ENCODE measurements at regions of chr9 and their contacts with region 1.

Region 1: DNA sequence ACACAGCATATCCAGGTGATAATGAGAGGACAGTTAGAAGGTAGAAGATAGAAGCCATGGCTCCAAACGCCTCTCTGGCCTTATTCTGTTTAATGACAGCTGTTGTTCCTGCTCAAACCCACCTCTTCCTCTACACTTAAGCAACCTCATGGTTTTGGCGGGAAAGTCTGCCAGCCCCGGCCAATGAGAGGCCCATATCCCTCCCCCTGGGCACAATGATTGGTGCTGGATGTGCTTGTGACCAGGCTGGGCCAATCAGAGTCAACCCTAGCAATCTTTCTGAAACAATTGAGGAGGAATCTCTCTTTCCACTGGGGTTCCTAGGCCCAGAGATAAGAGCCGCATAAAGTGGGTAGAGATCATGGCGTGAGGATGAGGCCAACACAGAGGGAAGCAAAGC is 4.8 kb upstream of the GFI1B start:
- DNase-seq: peak; percentile 47
- H3K4me3 ChIP-seq: no peak overlapping the region
- H3K27ac ChIP-seq: no peak overlapping the region
- H3K4me1 ChIP-seq: peaks cover 17% of the 10 kb centered on the region
- CTCF ChIP-seq: no peak

Region 2: DNA sequence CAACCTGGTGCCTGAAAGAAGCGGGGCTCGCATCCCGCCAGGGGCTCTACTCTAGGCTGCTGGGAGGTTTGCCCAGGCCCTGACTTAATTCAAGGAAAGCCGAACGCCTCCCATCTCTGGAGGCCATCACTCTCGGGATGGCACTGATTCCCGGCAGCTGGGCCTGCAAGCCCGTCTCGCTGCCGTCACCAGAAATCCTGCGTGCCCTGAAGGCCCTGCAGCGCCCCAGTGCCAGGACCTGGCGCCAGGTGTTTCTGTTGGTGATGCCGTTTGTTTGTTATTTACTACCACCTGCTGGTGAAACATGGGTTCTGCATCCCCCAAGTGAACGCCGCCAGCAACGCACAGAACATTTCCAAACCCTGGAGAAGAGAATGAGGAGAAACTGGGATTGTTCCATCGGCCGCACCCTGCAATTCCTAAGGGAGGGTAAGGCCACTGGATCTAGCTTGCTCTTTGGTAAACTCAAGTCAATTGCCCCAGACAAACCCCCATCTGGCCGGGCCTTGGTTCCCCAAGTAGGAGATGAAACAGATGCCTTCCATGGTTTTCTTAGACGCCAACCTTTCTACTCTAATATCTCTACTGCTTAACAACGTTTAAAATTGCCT is 173.6 kb before region 1 on chr9:
- CTCF ChIA-PET with region 1: no interaction called
- POLR2A ChIA-PET with region 1: no interaction called
- intact Hi-C with region 1: loop called (anchors 5 kb)
- DNase-seq: peak; percentile 73
- H3K4me3 ChIP-seq: no peak overlapping the region
- H3K27ac ChIP-seq: no peak overlapping the region
- H3K4me1 ChIP-seq: no peaks in the 10 kb centered on the region
- CTCF ChIP-seq: peak; percentile 89

Region 3: DNA sequence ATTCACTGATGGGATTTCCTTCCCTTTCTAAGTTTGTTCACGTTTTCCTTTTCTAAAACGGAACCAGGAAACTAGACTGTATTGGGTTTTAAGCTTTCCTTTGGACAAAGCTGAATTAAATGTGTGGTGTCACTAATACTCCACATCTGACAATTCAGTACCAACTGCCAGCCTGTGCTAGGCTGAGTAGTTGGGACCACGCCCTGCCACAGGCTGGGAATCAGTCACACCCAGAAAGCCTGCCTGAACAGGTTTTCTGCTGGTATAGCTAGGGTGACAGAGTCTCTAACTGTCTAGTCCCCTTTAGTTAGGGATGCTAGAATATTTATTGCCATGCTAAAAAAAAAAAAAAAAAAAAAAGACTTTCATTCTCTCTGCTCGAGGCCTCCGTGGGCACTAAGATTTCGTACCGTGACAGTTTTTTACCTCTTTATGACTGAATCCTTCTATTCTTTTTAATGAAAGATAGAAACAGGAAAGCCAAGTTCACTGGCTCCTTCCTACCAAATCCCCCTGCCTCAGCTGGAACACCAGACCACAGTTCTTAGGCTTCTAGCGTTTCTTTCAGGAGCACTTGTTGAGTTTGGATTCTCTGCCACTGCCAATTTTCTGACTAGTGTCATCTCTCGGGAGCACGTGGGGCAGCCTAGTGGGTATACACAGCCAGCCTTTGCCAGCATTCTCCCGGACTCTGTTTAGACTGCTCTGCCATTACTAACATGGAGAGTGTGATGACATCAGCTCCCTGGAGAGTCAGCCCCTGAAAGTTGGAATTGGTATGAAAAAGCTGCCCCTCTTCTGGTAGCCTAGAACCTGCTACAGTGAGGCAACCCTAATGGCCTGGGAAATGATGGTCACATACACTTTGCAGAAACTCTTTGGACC is 79.1 kb before region 1 on chr9:
- CTCF ChIA-PET with region 1: no interaction called
- POLR2A ChIA-PET with region 1: no interaction called
- intact Hi-C with region 1: loop called (anchors 5 kb)
- DNase-seq: no peak
- H3K4me3 ChIP-seq: no peak overlapping the region
- H3K27ac ChIP-seq: no peak overlapping the region
- H3K4me1 ChIP-seq: no peaks in the 10 kb centered on the region
- CTCF ChIP-seq: no peak

Region 4: GRCh38 chr9:132908635-132909034 is 65.1 kb before region 1 on chr9:
- CTCF ChIA-PET with region 1: no interaction called
- POLR2A ChIA-PET with region 1: no interaction called
- intact Hi-C with region 1: no loop called
- DNase-seq: no peak
- H3K4me3 ChIP-seq: no peak overlapping the region
- H3K27ac ChIP-seq: no peak overlapping the region
- H3K4me1 ChIP-seq: no peaks in the 10 kb centered on the region
- CTCF ChIP-seq: no peak

Region 5: GRCh38 chr9:133023117-133023890 is 49.6 kb after region 1 on chr9:
- CTCF ChIA-PET with region 1: no interaction called
- POLR2A ChIA-PET with region 1: no interaction called
- intact Hi-C with region 1: loop called (anchors 2 kb)
- DNase-seq: peak; percentile 66
- H3K4me3 ChIP-seq: no peak overlapping the region
- H3K27ac ChIP-seq: no peak overlapping the region
- H3K4me1 ChIP-seq: peaks cover 30% of the 10 kb centered on the region
- CTCF ChIP-seq: no peak

Measured in OCI-LY7 (cell line).